Breast epithelium (tissue), 4 donors: ENCODE measurements at regions of chr12 and their contacts with region 1.

Region 1: DNA sequence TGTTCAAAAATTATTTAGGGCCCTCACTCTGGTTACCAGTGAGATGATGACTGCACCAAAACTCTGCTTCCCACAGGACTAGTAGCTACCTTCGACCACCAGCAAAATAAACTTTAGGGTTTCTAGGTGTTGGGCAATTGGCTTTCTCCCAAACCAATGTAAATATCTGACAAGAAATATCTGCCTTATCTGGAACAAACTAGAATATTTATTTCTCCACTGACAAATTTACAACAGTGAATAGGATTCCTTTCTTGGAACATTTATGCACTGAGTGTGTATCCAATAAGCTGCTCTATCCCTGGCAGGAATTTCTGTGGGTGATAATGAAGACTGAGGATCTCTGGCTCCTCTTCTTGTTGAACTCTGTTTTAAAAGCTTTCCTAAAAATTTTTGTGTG is 148.6 kb downstream of the SLC6A15 start:
- DNase-seq: no peak
- H3K4me3 ChIP-seq: no peak overlapping the region
- H3K27ac ChIP-seq: no peak overlapping the region
- H3K4me1 ChIP-seq: no peaks in the 10 kb centered on the region
- H3K27me3 ChIP-seq: no peaks in the 10 kb centered on the region
- CTCF ChIP-seq: no peak
- POLR2A ChIP-seq: no peak

Region 2: GRCh38 chr12:84706374-84706773 is 57.6 kb before region 1 on chr12:
- intact Hi-C with region 1: no loop called
- DNase-seq: no peak
- H3K4me3 ChIP-seq: no peak overlapping the region
- H3K27ac ChIP-seq: no peak overlapping the region
- H3K4me1 ChIP-seq: no peaks in the 10 kb centered on the region
- H3K27me3 ChIP-seq: no peaks in the 10 kb centered on the region
- CTCF ChIP-seq: no peak
- POLR2A ChIP-seq: no peak

Region 3: GRCh38 chr12:84793558-84794296 is 29.7 kb after region 1 on chr12:
- intact Hi-C with region 1: loop called (anchors 2 kb)
- DNase-seq: no peak
- H3K4me3 ChIP-seq: no peak overlapping the region
- H3K27ac ChIP-seq: no peak overlapping the region
- H3K4me1 ChIP-seq: no peaks in the 10 kb centered on the region
- H3K27me3 ChIP-seq: no peaks in the 10 kb centered on the region
- CTCF ChIP-seq: no peak
- POLR2A ChIP-seq: no peak